ENCODE measurements at regions of chr2 and their contacts with region 1.

Region 1: DNA sequence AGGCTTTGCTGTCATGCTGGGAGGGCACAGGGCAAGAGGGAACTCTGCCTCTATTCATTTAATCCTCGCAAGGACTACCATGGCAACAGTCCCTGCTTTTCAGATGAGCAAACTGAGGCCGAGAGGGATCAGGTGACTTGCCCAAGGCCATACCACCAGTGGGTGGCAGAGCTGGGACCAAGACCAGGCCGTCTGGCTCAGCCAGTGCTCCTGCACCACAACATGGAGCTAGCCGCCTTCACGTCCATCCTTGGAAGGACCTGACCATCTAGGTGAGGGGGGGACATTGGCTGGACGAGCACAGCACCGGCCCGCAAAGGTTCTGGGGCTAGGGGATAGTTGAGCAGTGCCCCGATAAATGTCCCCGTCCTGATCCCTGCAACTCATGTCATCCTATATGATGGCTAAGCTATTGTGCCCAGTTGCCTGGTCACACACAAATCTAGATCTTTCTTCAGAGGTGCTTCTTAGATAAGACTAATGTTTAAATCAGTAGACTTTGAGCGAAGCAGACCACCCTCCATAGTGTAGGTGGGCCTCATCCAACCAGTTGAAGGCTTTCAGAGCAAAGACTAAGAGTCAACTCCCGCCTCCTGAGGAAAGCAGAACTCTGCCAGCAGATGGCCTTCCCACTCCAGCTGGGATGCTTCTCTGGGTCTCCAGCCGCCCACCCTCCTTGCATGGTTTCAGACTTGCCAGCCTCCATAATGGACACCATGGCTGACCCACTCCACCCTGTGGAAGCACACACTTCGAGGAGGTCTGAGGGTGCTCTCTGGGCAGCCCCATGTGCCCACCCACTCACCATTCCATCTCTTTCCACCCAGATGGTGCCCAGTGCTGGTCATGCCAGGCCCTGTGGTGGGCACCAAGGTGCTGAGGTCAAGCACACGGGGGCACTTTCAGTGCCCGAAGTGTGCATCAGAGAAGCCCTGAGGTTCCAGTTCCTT is 214.8 kb upstream of the RAB6C start:
- DNase-seq: peak in 1 of 2 experiments; percentile 16
- H3K4me3 ChIP-seq: no peak overlapping the region
- H3K4me3 Mint-ChIP-seq: no peak overlapping the region
- H3K27ac Mint-ChIP-seq: no peak overlapping the region
- H3K4me1 ChIP-seq: no peaks in the 10 kb centered on the region
- H3K4me1 Mint-ChIP-seq: no peaks in the 10 kb centered on the region
- H3K27me3 ChIP-seq: no peaks in the 10 kb centered on the region
- H3K27me3 Mint-ChIP-seq: peaks cover 13% of the 10 kb centered on the region
- CTCF ChIP-seq: peak in 1 of 2 experiments; percentile 15

Region 2: GRCh38 chr2:129619471-129619870 is 145.2 kb before region 1 on chr2:
- CTCF ChIA-PET with region 1: no interaction called
- POLR2A ChIA-PET with region 1: no interaction called
- intact Hi-C with region 1: no loop called
- DNase-seq: no peak
- H3K4me3 ChIP-seq: no peak overlapping the region
- H3K4me3 Mint-ChIP-seq: no peak overlapping the region
- H3K27ac Mint-ChIP-seq: no peak overlapping the region
- H3K4me1 ChIP-seq: no peaks in the 10 kb centered on the region
- H3K4me1 Mint-ChIP-seq: no peaks in the 10 kb centered on the region
- H3K27me3 ChIP-seq: no peaks in the 10 kb centered on the region; the same call in 1 of the 2 replicates
- H3K27me3 Mint-ChIP-seq: peaks cover 35% of the 10 kb centered on the region
- CTCF ChIP-seq: no peak

Region 3: GRCh38 chr2:129849559-129850160 is 85.0 kb after region 1 on chr2:
- CTCF ChIA-PET with region 1: no interaction called
- POLR2A ChIA-PET with region 1: no interaction called
- intact Hi-C with region 1: loop called (anchors 1 kb)
- DNase-seq: peak in 1 of 2 experiments; percentile 53
- H3K4me3 ChIP-seq: no peak overlapping the region
- H3K4me3 Mint-ChIP-seq: no peak overlapping the region
- H3K27ac Mint-ChIP-seq: no peak overlapping the region
- H3K4me1 ChIP-seq: no peaks in the 10 kb centered on the region
- H3K4me1 Mint-ChIP-seq: no peaks in the 10 kb centered on the region
- H3K27me3 ChIP-seq: no peaks in the 10 kb centered on the region
- H3K27me3 Mint-ChIP-seq: peaks cover 18% of the 10 kb centered on the region
- CTCF ChIP-seq: peak; percentile 63 to 70

Measured in Caco-2 (cell line).